CD4-positive, alpha-beta T cell (primary cell): ENCODE measurements at regions of chr6 and their contacts with region 1.

Region 1: DNA sequence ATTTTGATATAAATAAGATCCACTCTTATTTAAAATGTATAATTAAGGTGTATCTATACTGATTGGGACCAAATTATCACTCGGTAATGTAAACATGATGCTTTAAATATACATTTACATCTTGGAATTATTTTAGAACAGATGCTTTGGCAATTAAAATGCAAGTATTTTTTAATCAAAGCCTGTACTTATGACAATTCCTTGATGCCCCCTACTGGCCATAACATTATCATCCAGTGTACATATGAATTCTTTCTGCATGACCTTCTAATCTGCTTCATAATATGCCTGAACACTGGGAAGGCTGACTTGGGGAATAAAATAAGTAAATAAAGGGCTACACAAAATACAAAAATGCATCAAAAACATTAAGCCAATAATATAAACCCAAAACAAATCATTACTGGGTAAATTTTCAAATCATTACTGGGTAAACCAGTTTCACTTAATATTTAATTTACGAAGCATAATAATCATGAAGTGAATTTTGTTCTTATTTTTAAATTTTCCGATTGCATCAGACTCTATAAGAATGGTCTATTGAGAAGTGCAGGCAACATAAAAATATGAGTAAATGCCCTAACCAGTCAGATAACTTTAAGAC is 65.1 kb downstream of the CGA start:
- DNase-seq: peak in 3 of 14 experiments; percentile 6 to 15 (median 15)
- ATAC-seq: no peak
- H3K4me3 ChIP-seq: no peak overlapping the region
- H3K4me3 Mint-ChIP-seq: no peak overlapping the region
- H3K27ac ChIP-seq: no peak overlapping the region
- H3K27ac Mint-ChIP-seq: no peak overlapping the region
- H3K4me1 ChIP-seq: no peaks in the 10 kb centered on the region
- H3K4me1 Mint-ChIP-seq: no peaks in the 10 kb centered on the region
- H3K27me3 ChIP-seq: no peaks in the 10 kb centered on the region
- H3K27me3 Mint-ChIP-seq: no peaks in the 10 kb centered on the region
- CTCF ChIP-seq: peak; percentile 45

Region 2: DNA sequence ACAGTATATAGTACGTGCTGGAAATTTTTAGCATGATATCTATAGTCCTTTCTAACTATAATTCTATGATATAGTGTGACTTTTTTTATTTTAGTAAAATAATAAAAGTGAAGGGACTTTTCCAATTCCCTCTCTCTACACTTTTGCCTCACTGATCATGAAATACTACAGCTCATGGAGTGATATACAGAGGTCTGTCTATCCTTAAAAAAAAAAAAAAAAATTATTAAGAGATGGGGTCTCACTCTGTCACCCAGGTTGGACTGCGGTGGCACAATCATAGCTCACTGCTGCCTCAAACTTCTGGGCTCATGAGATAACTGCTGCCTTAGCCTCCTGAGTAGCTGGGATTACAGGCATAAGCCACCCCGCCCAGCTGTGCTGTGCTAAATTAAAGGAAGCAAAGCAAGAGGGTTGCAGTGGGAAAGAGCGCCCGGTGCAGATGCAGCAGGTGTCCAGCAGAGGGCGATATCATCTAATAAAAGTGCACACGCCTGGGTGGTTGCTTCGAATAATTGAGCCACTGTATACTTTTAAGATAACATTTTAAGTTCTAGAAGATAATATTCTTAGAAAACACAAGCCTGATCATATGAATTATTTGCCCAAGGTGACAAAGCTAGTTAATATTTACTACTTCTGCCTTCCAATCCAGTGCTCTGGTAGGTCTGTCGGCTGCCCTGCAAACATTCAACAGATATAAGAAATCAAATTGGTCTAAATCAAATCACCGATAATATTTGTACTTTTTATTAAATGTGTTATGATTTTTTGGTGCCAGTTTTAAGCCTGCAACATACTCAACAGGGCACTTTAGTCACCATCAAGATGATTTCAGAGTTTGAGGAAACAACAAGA is 1674.8 kb before region 1 on chr6:
- CTCF ChIA-PET with region 1: no interaction called
- POLR2A ChIA-PET with region 1: no interaction called
- intact Hi-C with region 1: loop called in 1 of 2 experiments (anchors 10 kb)
- DNase-seq: peak; percentile 12 to 64 (median 35)
- ATAC-seq: peak; percentile 49
- H3K4me3 ChIP-seq: no peak overlapping the region
- H3K4me3 Mint-ChIP-seq: no peak overlapping the region
- H3K27ac ChIP-seq: no peak overlapping the region
- H3K27ac Mint-ChIP-seq: no peak overlapping the region
- H3K4me1 ChIP-seq: no peaks in the 10 kb centered on the region
- H3K4me1 Mint-ChIP-seq: no peaks in the 10 kb centered on the region
- H3K27me3 ChIP-seq: no peaks in the 10 kb centered on the region
- H3K27me3 Mint-ChIP-seq: no peaks in the 10 kb centered on the region
- CTCF ChIP-seq: peak; percentile 96